ENCODE measurements at regions of chr1 and their contacts with region 1.

Region 1: DNA sequence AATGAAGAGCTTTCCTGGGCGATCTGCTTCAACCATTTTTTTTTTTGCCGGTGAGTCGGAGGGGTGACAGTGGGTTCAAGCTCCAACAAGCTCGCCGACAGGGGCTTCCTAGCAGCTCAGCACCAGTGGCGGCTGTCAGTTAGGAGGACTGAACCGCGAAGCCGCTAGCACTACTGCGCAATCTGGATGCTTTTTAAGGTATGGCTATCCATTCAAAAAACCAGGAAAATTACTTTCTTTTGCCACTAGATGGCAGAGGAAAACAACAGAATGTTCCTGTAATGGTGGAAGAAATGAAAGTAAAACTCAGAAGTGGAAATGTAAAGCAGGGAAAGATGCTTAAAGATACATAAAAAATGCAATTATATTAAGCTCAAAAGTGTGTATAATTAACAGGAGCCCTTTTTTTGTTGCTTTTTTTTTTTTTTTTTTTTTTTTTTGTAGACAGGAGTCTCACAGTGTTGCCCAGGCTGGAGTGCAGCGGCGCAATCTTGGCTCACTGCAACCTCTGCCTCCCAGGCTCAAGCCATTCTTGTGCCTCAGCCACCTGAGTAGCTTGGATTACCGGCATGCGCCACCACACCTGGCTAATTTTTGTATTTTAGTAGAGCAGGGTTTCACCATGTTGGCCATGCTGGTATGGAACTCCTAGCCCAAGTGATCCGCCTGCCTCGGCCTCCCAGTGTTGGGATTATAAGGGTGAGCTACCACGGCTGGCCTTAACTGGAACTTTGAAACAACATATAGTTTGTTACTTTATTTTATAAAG is 8.5 kb downstream of the KYAT3 start:
- DNase-seq: peak; percentile 65
- H3K4me3 ChIP-seq: peak overlapping the region in 1 of 3 experiments; percentile 34
- H3K27ac ChIP-seq: peak overlapping the region; percentile 34
- H3K4me1 ChIP-seq: peaks cover 19% of the 10 kb centered on the region
- H3K27me3 ChIP-seq: no peaks in the 10 kb centered on the region
- CTCF ChIP-seq: peak; percentile 48 to 50
- POLR2A ChIP-seq: no peak

Region 2: GRCh38 chr1:88730132-88730675 is 253.8 kb before region 1 on chr1:
- CTCF ChIA-PET with region 1: no interaction called
- POLR2A ChIA-PET with region 1: no interaction called
- dilution Hi-C with region 1: no loop called
- intact Hi-C with region 1: no loop called
- DNase-seq: no peak
- H3K4me3 ChIP-seq: no peak overlapping the region
- H3K27ac ChIP-seq: no peak overlapping the region
- H3K4me1 ChIP-seq: peaks cover 7% of the 10 kb centered on the region
- H3K27me3 ChIP-seq: no peaks in the 10 kb centered on the region
- CTCF ChIP-seq: no peak
- POLR2A ChIP-seq: no peak

Region 3: GRCh38 chr1:88910401-88910800 is 73.6 kb before region 1 on chr1:
- CTCF ChIA-PET with region 1: no interaction called
- POLR2A ChIA-PET with region 1: no interaction called
- dilution Hi-C with region 1: no loop called
- intact Hi-C with region 1: no loop called
- DNase-seq: no peak
- H3K4me3 ChIP-seq: no peak overlapping the region
- H3K27ac ChIP-seq: no peak overlapping the region
- H3K4me1 ChIP-seq: no peaks in the 10 kb centered on the region
- H3K27me3 ChIP-seq: no peaks in the 10 kb centered on the region
- CTCF ChIP-seq: no peak
- POLR2A ChIP-seq: no peak

Region 4: DNA sequence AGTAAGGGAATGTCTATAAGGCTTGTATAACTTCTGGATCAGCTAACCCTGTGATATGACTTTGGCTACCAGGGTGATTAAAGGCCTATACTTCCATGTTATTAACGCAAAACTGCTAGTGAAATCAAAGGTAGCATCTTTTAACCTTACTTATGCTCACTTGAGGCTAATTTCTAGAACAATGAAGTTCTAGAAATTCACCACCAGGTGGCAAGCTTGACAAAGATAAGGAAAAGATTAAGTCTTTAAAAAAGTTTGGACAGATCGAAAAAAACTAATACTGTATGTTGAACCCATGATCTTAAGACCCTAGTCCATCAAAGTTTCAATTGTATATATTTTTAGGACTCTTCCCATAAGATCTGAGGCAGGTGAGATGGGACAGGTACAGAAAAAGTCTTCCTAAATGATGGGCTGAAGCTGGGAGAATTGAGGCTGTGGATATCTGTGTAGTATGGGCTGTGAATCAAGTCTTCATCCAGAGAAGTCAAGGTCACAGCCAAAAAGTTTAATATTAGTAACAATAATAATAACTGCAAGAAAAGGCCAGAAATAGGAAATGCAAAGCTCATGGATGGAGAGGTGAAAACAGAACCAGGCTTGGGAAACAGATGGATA is 10.3 kb before region 1 on chr1:
- CTCF ChIA-PET with region 1: interaction called, 36 read pairs
- POLR2A ChIA-PET with region 1: no interaction called
- dilution Hi-C with region 1: no loop called
- intact Hi-C with region 1: no loop called
- DNase-seq: peak; percentile 55
- H3K4me3 ChIP-seq: no peak overlapping the region
- H3K27ac ChIP-seq: no peak overlapping the region
- H3K4me1 ChIP-seq: no peaks in the 10 kb centered on the region
- H3K27me3 ChIP-seq: no peaks in the 10 kb centered on the region
- CTCF ChIP-seq: peak; percentile 34 to 35
- POLR2A ChIP-seq: no peak

Region 5: DNA sequence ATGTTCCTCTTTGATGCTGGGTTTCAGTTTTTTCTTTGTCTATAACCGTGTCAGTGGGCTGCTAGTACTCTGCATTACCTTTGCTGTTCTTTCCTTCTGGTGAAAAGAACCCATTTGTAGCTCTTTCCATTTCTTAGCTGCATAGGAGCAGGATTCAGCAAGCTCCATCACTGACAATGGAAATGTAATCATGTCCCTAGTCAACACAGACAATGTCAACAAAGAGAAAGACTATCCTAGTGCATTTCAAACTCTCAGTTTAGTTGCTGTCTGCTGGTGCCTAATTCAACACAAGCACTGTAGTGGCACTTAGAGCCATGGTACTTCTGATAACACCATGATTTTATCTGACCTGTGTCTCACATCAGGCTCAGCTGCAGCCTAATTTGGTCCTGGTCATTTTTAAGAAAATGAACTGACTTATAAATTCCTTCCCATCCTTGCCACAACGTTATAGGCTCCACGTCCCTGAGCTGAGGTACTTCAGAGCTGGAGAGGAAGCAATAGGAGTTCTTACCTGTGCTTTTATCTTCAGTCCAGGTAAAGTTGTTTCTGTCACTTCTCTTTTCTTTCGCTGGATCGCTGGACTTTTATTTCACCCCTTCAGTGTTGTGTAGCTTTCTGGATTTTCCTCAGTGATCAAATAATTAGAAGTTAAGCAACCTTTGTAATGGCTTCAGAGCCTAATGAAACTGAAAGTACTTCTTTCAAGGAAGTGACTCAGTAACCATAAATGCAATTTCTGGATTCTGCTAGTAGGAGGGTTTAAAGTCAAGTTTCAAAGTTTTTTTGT is 38.4 kb after region 1 on chr1 and contains the start of gene GBP3:
- CTCF ChIA-PET with region 1: interaction called, 14 read pairs
- POLR2A ChIA-PET with region 1: no interaction called
- dilution Hi-C with region 1: no loop called
- intact Hi-C with region 1: no loop called
- DNase-seq: peak; percentile 76
- H3K4me3 ChIP-seq: peak within 1 kb of the TSS; percentile 59 to 97 (median 87)
- H3K27ac ChIP-seq: peak within 1 kb of the TSS; percentile 74
- H3K4me1 ChIP-seq: peaks cover 11% of the 10 kb centered on the region
- H3K27me3 ChIP-seq: no peaks in the 10 kb centered on the region
- CTCF ChIP-seq: no peak
- POLR2A ChIP-seq: no peak
- total RNA-seq, gene GBP3: 7.3 and 12.7 TPM in 2 replicates

Region 6: DNA sequence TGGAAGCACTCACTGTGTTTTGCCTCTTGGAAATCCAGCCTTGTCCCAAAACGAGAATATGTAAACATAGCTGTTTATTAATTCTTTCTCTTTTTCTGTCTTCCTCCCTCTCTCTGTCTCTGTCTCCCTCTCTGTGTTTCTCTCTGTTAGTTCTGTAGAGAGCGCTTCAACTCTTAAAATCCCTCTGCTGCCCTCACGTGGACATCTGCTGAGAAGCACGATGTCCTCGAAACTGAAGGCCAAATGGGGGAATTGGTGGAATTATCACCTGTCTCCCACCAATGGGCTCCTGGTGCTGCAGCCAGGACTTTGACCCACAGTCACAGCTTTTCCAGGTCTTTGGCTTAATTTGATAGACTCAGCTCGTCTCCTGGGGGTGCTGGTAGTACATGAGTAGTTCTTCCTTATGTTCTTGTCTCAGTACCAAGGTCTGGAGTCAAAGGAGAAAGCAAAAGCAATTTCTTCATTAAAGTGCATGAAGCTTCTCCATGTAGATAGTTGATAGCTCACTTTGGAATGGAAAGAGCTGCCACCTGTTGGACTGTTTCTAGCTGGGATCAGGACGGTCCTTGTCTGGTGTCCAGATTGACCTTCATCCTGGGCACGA is 374.4 kb after region 1 on chr1:
- CTCF ChIA-PET with region 1: interaction called, 12 read pairs
- POLR2A ChIA-PET with region 1: no interaction called
- dilution Hi-C with region 1: no loop called
- intact Hi-C with region 1: loop called (anchors 1 kb)
- DNase-seq: peak; percentile 62
- H3K4me3 ChIP-seq: no peak overlapping the region
- H3K27ac ChIP-seq: no peak overlapping the region
- H3K4me1 ChIP-seq: no peaks in the 10 kb centered on the region
- H3K27me3 ChIP-seq: peaks cover 4 to 10% of the 10 kb centered on the region in 2 experiments
- CTCF ChIP-seq: peak; percentile 63 to 75
- POLR2A ChIP-seq: no peak

Region 7: DNA sequence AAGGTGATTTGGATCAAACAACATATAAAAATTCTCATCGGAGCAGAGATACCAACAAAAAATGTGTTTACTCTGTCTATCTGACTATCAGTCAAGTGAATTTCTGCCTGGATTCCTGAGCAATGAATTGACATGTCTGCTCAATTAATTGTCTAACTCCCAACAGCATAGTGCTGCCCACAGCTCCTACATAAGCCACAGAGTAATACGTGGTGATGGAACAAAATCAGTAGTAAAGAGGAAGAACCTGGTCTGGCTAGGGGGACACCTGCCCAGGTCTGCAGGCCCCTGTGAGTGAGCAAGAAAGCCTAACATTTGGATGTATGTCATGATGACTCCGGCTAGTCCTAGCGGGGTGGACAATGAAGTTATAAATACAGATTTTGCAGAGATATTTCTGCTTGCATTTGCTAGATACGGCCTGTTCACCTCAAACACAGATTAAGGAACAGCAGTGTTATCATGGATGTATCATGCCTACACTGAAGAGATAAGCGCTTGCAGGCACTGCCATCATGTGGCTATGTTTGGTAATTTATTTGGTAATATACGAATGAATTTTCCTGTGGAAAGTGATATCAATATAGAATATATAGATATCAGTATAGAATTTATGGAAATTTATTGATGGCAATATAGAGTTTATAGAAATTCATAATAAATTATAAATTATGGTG is 471.0 kb after region 1 on chr1:
- CTCF ChIA-PET with region 1: interaction called, 9 read pairs
- POLR2A ChIA-PET with region 1: no interaction called
- dilution Hi-C with region 1: no loop called
- intact Hi-C with region 1: loop called (anchors 1 kb)
- DNase-seq: peak; percentile 58
- H3K4me3 ChIP-seq: no peak overlapping the region
- H3K27ac ChIP-seq: no peak overlapping the region
- H3K4me1 ChIP-seq: no peaks in the 10 kb centered on the region
- H3K27me3 ChIP-seq: peaks cover 0 to 7% of the 10 kb centered on the region in 2 experiments
- CTCF ChIP-seq: peak; percentile 22 to 39
- POLR2A ChIP-seq: no peak